ENCODE measurements at regions of chr20 and their contacts with region 1.

Region 1: DNA sequence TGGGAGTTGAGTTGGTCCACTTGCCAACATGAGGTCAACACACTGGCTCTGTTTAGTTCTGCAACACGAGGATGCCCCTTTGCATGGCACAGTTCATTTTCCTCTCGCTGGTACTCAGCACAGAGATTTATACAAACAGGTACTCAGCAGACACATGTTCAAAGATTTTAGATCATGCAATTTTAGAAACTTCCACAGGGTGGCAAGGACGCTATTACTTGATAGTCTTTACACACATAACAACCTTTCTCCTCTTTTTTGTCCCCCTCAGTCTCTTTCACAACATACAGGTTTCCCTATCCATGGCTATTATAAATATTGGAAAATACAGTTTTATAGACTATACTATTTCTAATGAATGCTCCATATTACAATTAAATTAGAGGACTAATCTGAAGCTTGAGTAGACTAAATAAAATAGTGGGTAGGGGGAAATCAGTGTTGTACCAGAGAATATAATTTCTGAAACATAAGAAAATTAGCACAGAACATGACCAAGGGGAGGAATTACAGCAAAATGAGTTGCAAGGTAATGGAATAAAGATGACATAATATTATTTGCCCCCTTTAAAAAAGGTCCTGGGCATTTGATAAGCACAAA is 331.8 kb upstream of the BTBD3 start:
- DNase-seq: no peak
- ATAC-seq: no peak
- H3K4me3 ChIP-seq: no peak overlapping the region
- H3K4me3 Mint-ChIP-seq: no peak overlapping the region
- H3K27ac ChIP-seq: no peak overlapping the region
- H3K27ac Mint-ChIP-seq: no peak overlapping the region
- H3K4me1 ChIP-seq: no peaks in the 10 kb centered on the region
- H3K4me1 Mint-ChIP-seq: no peaks in the 10 kb centered on the region
- H3K27me3 ChIP-seq: no peaks in the 10 kb centered on the region
- H3K27me3 Mint-ChIP-seq: no peaks in the 10 kb centered on the region
- CTCF ChIP-seq: no peak

Region 2: GRCh38 chr20:11496380-11496779 is 89.5 kb before region 1 on chr20:
- CTCF ChIA-PET with region 1: no interaction called
- POLR2A ChIA-PET with region 1: no interaction called
- intact Hi-C with region 1: loop called in 1 of 2 experiments (anchors 5 kb)
- DNase-seq: no peak
- ATAC-seq: no peak
- H3K4me3 ChIP-seq: no peak overlapping the region
- H3K4me3 Mint-ChIP-seq: no peak overlapping the region
- H3K27ac ChIP-seq: no peak overlapping the region
- H3K27ac Mint-ChIP-seq: no peak overlapping the region
- H3K4me1 ChIP-seq: no peaks in the 10 kb centered on the region
- H3K4me1 Mint-ChIP-seq: no peaks in the 10 kb centered on the region
- H3K27me3 ChIP-seq: no peaks in the 10 kb centered on the region
- H3K27me3 Mint-ChIP-seq: no peaks in the 10 kb centered on the region
- CTCF ChIP-seq: no peak

Region 3: DNA sequence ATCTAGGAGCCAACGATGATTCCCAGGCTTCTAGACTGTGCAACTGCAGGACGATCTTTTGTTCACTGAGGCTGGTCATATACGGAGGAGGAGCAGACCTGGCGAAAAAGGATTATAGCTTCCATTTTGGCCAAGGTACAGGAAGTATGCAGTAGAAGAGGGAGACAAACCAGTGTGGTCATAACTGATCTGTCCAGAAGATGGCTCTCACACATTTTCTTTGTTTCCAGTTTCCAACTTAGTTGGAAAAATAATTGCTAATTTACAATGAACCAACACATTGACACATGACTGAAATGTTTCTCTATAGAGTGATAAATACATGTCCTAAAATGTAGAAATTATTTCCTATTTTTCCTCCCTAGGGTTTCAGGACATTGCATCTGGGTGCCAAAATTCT is 32.2 kb before region 1 on chr20:
- CTCF ChIA-PET with region 1: no interaction called
- POLR2A ChIA-PET with region 1: no interaction called
- intact Hi-C with region 1: no loop called
- DNase-seq: no peak
- ATAC-seq: no peak
- H3K4me3 ChIP-seq: no peak overlapping the region
- H3K4me3 Mint-ChIP-seq: no peak overlapping the region
- H3K27ac ChIP-seq: no peak overlapping the region
- H3K27ac Mint-ChIP-seq: no peak overlapping the region
- H3K4me1 ChIP-seq: no peaks in the 10 kb centered on the region
- H3K4me1 Mint-ChIP-seq: no peaks in the 10 kb centered on the region
- H3K27me3 ChIP-seq: no peaks in the 10 kb centered on the region
- H3K27me3 Mint-ChIP-seq: no peaks in the 10 kb centered on the region
- CTCF ChIP-seq: no peak

Measured in CD8-positive, alpha-beta T cell (primary cell).